Activated T-helper 1 cell treated with anti-CD3 and anti-CD28 coated beads, Interleukin-12 subunit alpha, Interleukin-12 subunit beta, Interleukin-2, Interleukin-4 antibody, amounts not matched to agents 30 ng/mL and 10 ng/mL and 1 ng/mL, durations not matched to agents 14 hours and 24 hours and 36 hours (primary cell): ENCODE measurements at regions of chr9 and their contacts with region 1.

Region 1: DNA sequence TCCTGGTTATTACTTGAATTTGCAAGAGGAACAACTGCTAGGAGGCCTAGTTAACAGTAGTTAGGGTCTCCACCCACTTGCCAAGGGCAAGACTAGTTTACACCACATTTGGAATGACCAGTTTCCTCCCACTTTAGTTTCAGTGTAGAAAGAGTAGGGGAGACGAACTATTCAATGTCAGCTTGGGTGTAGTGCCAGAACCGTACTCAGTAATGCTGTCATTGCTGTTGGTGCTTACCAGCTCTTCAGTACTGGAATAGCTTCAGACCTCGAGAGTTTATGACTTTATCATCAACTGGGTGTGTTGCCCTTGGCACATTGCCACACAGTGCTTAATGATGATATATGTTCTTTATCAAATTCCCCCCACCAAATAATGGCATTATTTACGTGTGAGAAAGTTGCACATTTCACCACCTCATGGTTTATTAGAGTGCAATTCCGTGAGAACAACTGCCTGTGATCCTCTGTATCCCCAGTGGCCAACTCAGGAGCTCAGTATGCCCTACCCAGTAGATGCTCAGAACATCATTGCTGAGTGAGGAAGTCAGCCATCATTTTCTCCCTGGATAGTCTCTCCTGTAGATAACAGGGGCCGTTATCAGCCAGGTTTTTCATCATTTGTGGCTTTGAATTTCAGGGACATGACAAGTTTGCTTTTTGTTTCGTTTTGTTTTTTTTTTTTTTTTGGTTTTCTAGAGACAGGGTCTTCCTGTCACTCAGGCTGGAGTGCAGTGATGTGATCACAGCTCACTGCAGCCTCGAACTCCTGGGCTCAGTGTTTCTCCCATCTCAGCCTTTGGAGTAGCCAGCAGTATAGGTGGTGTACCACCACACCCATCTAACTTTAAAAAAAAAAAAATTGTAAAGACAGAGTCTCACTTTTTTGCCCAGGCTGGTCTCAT is 67.3 kb downstream of the DOCK8 start:
- DNase-seq: no peak
- H3K4me3 Mint-ChIP-seq: peak overlapping the region; percentile 80
- H3K27ac Mint-ChIP-seq: peak overlapping the region; percentile 82
- H3K4me1 Mint-ChIP-seq: peaks cover 54% of the 10 kb centered on the region
- H3K27me3 Mint-ChIP-seq: no peaks in the 10 kb centered on the region

Region 2: GRCh38 chr9:214648-215493 is 67.1 kb before region 1 on chr9 and contains the start of gene DOCK8:
- intact Hi-C with region 1: loop called (anchors 2 kb)
- DNase-seq: peak; percentile 58
- H3K4me3 Mint-ChIP-seq: peak within 1 kb of the TSS; percentile 83
- H3K27ac Mint-ChIP-seq: peak within 1 kb of the TSS; percentile 85
- H3K4me1 Mint-ChIP-seq: peaks cover 24% of the 10 kb centered on the region
- H3K27me3 Mint-ChIP-seq: no peaks in the 10 kb centered on the region
- total RNA-seq, gene DOCK8: 120 and 122 TPM in 2 replicates